Psoas muscle (tissue), 8 donors: ENCODE measurements at regions of chr11 and their contacts with region 1.

Region 1: GRCh38 chr11:57712256-57713150 is at the start of gene TMX2:
- DNase-seq: peak; percentile 91 to 95
- ATAC-seq: peak; percentile 95 to 97 (median 96)
- H3K4me3 ChIP-seq: peak within 1 kb of the TSS; percentile 93
- H3K27ac ChIP-seq: peak within 1 kb of the TSS; percentile 88
- H3K4me1 ChIP-seq: peaks cover 36% of the 10 kb centered on the region
- H3K27me3 ChIP-seq: no peaks in the 10 kb centered on the region
- CTCF ChIP-seq: no peak
- total RNA-seq, gene TMX2: 31.5 to 69.7 (median 51.1) TPM

Region 2: DNA sequence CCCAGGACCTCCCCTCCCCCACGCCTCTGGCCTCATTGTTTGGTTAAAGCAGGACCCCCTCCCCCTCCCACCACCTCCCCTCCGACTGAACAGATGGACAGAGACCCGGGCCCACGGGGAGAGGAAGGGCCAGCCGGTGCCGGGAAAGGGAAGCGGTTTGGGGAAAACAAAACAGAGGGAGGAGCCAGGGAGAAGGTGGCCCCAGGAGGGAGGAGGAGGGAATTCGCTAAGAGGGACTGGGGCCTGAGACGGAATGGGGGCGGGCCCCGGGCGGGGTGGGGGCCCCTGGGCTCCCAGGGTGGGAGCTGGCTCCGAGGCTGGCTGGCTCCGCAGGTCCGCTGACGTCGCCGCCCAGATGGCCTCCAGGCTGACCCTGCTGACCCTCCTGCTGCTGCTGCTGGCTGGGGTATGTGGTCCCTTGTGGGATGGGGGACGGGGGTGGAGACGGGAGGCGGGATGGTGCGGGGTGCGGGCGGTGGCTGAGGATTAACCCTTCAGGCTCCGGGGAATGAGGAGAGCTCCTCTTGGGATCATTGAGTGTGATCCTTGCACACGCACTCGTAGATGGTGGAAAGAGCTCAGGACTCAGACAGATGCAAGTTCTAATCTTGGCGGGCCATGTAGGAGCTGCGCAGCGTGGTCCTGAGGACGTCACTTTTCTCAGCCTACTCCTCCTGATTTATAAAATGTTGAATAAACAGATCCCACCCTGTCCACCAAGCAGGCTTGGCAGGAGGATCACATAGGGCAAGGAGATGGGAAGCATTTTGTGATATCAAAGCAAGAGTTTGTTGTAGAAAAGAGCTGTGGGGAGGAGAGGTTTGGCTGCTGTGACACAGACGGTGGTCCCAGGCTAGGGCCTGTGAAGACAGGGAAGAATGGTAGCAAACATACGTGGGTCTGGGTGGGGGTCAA is 114.3 kb before region 1 on chr11:
- intact Hi-C with region 1: no loop called
- DNase-seq: peak; percentile 86 to 93
- ATAC-seq: peak; percentile 77 to 89 (median 80)
- H3K4me3 ChIP-seq: peak overlapping the region; percentile 61
- H3K27ac ChIP-seq: peak overlapping the region; percentile 68
- H3K4me1 ChIP-seq: no peaks in the 10 kb centered on the region
- H3K27me3 ChIP-seq: peaks cover 0 to 12% (median 0%) of the 10 kb centered on the region in 3 donors
- CTCF ChIP-seq: no peak

Region 3: DNA sequence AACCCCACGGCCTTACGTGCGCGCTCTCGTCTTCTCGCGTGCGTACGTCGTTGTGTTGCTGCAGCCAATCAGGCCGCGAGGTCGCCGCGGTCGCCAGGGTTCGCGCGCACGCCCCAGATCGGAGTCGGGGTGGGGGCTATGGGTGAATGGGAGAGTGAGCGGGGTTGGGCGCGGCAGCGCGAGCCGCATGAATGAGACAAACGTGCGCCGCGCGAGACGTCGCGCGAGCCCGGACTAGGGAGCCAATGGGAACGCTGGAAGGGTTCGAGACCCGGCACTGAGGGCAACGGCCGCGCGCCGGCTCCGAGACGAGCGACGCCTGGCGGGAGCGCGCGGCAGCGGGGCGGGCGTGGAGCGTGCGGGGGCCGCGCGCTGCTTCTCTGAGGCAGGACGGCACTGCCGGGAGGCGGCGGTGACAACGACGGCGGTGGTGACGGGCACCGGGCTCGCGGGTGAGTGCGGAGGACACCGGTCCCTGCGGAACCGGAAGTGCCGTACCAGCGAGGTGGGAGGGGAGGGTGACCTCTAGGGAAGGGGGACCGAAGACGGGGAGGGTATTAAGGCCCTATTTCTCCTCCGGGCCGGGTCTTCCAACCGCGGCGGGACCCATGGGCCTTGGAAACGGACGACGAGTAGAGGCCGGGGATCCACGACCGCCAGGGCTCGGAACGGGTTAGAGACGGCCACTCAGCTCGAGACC is 44.6 kb before region 1 on chr11 and contains the start of gene ZDHHC5:
- intact Hi-C with region 1: loop called (anchors 5 kb)
- DNase-seq: peak; percentile 99 to 100
- ATAC-seq: peak; percentile 92 to 95 (median 93)
- H3K4me3 ChIP-seq: peak within 1 kb of the TSS; percentile 92
- H3K27ac ChIP-seq: peak within 1 kb of the TSS; percentile 99
- H3K4me1 ChIP-seq: peaks cover 20% of the 10 kb centered on the region
- H3K27me3 ChIP-seq: no peaks in the 10 kb centered on the region
- CTCF ChIP-seq: peak; percentile 52
- total RNA-seq, gene ZDHHC5: 35.2 to 63.5 (median 53.3) TPM

Region 4: GRCh38 chr11:57674251-57674650 is 38.3 kb before region 1 on chr11:
- intact Hi-C with region 1: loop called (anchors 5 kb)
- DNase-seq: no peak
- ATAC-seq: no peak
- H3K4me3 ChIP-seq: no peak overlapping the region
- H3K27ac ChIP-seq: no peak overlapping the region
- H3K4me1 ChIP-seq: peaks cover 17% of the 10 kb centered on the region
- H3K27me3 ChIP-seq: no peaks in the 10 kb centered on the region
- CTCF ChIP-seq: no peak